HepG2 (cell line): ENCODE measurements at regions of chr6 and their contacts with region 1.

Region 1: DNA sequence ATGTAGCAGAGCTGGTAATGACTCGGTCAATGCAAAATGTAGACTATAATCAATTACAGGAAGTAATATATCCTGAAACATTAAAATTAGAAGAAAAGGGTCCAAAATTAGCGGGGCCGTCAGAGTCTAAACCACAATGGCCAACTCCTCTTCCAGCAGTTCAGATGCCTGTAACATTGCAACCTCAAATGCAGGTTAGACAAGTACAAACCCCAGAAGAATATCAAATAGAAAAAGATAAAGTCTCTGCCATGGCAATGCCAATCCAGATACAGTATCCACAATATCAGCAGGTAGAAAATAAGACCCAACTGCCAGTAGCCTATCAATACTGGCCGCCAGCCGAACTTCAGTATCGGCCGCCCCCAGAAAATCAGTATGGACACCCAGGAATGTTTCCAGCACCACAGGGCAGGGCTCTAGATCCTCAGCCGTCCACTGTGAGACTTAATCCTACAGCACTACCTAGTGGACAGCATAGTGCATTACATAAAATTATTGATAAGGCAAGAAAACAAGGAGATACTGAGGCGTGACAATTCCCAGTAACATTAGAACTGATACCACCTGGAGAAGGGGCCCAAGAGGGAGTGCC is 158.4 kb downstream of the GPX5 start:
- DNase-seq: peak; percentile 68
- ATAC-seq: peak; percentile 86
- H3K4me3 ChIP-seq: peak overlapping the region in 2 of 3 experiments; percentile 37 to 44; a peak in 3 of 6 replicates
- H3K27ac ChIP-seq: no peak overlapping the region
- H3K4me1 ChIP-seq: peaks cover 34% of the 10 kb centered on the region
- H3K27me3 ChIP-seq: peaks cover 0 to 13% of the 10 kb centered on the region in 2 experiments; a peak in 2 of 5 replicates
- CTCF ChIP-seq: peak; percentile 91
- EP300 ChIP-seq: no peak
- POLR2A ChIP-seq: no peak
- RAD21 ChIP-seq: peak; percentile 72; the same call in 1 of the 2 replicates

Region 2: GRCh38 chr6:28399350-28400121 is 284.5 kb before region 1 on chr6 and contains the start of gene ZSCAN12:
- CTCF ChIA-PET with region 1: interaction called, 10 read pairs
- POLR2A ChIA-PET with region 1: no interaction called
- in situ Hi-C with region 1: loop called (anchors 10 kb)
- intact Hi-C with region 1: loop called (anchors 1 kb)
- DNase-seq: peak; percentile 86
- ATAC-seq: peak; percentile 98
- H3K4me3 ChIP-seq: peak within 1 kb of the TSS; percentile 82 to 99 (median 94)
- H3K27ac ChIP-seq: peak within 1 kb of the TSS; percentile 68
- H3K4me1 ChIP-seq: peaks cover 49% of the 10 kb centered on the region
- H3K27me3 ChIP-seq: no peaks in the 10 kb centered on the region; a peak in 1 of 5 replicates
- CTCF ChIP-seq: peak; percentile 94
- EP300 ChIP-seq: peak in 1 of 2 experiments; percentile 64; a peak in 3 of 4 replicates
- POLR2A ChIP-seq: peak; percentile 83 to 90
- RAD21 ChIP-seq: peak; percentile 67
- total RNA-seq, gene ZSCAN12: 8.9 and 9.8 TPM in 2 replicates

Region 3: GRCh38 chr6:28531479-28532128 is 152.4 kb before region 1 on chr6:
- CTCF ChIA-PET with region 1: no interaction called
- POLR2A ChIA-PET with region 1: no interaction called
- in situ Hi-C with region 1: no loop called
- intact Hi-C with region 1: loop called (anchors 1 kb)
- DNase-seq: peak; percentile 18
- ATAC-seq: peak; percentile 46; the same call in 2 of the 3 replicates
- H3K4me3 ChIP-seq: no peak overlapping the region
- H3K27ac ChIP-seq: no peak overlapping the region
- H3K4me1 ChIP-seq: no peaks in the 10 kb centered on the region
- H3K27me3 ChIP-seq: peaks cover 0 to 4% of the 10 kb centered on the region in 2 experiments; a peak in 1 of 5 replicates
- CTCF ChIP-seq: peak; percentile 52
- EP300 ChIP-seq: no peak
- POLR2A ChIP-seq: no peak
- RAD21 ChIP-seq: no peak

Region 4: GRCh38 chr6:28586962-28587745 is 96.9 kb before region 1 on chr6:
- CTCF ChIA-PET with region 1: no interaction called
- POLR2A ChIA-PET with region 1: no interaction called
- in situ Hi-C with region 1: loop called (anchors 5 kb)
- intact Hi-C with region 1: loop called (anchors 5 kb)
- DNase-seq: peak; percentile 82
- ATAC-seq: peak; percentile 93
- H3K4me3 ChIP-seq: peak overlapping the region; percentile 74 to 86 (median 82)
- H3K27ac ChIP-seq: peak overlapping the region; percentile 62
- H3K4me1 ChIP-seq: peaks cover 50% of the 10 kb centered on the region
- H3K27me3 ChIP-seq: no peaks in the 10 kb centered on the region; a peak in 1 of 5 replicates
- CTCF ChIP-seq: peak; percentile 44; the same call in 1 of the 2 replicates
- EP300 ChIP-seq: peak in 1 of 2 experiments; percentile 35; a peak in 1 of 4 replicates
- POLR2A ChIP-seq: peak; percentile 86 to 98
- RAD21 ChIP-seq: peak; percentile 45; the same call in 1 of the 2 replicates

Region 5: DNA sequence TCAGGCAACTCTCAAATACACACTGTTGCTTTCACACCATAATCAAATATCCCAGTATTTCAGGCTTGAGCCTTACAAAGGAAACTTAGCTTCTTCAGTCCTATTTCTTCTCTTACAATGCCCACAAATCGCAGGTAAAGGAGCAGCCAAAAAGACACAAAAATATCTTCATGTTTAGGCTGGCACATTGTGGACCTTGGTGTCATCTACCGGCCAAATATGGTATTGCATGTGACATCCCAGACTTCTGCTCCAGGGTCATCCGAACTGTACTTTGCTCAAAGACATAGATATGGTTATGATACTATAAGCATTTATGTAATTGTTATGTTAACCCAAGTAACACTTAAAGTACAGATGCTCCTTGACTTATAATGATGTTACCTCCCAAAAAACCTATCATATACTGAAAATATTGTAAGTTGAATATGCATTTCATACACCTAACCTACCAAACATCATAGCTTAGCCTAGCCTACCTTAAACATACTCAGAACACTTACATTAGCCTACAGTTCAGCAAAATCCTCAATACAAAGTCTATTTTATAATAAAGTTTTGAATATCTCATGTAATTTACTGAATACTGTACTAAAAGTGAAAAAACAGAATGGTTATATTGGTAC is 905.5 kb after region 1 on chr6:
- CTCF ChIA-PET with region 1: interaction called, 4 read pairs
- POLR2A ChIA-PET with region 1: no interaction called
- in situ Hi-C with region 1: no loop called
- intact Hi-C with region 1: loop called (anchors 10 kb)
- DNase-seq: peak; percentile 40
- ATAC-seq: peak; percentile 84
- H3K4me3 ChIP-seq: no peak overlapping the region
- H3K27ac ChIP-seq: no peak overlapping the region
- H3K4me1 ChIP-seq: no peaks in the 10 kb centered on the region
- H3K27me3 ChIP-seq: peaks cover 0 to 7% of the 10 kb centered on the region in 2 experiments; a peak in 2 of 5 replicates
- CTCF ChIP-seq: peak; percentile 97
- EP300 ChIP-seq: no peak
- POLR2A ChIP-seq: no peak
- RAD21 ChIP-seq: peak; percentile 79